ENCODE measurements at regions of chr9 and their contacts with region 1.

Region 1: GRCh38 chr9:77820293-77820954 is 172.3 kb upstream of the GNA14 start:
- DNase-seq: peak; percentile 32
- H3K4me3 Mint-ChIP-seq: no peak overlapping the region
- H3K27ac Mint-ChIP-seq: peak overlapping the region; percentile 62
- H3K4me1 Mint-ChIP-seq: peaks cover 34% of the 10 kb centered on the region
- H3K27me3 Mint-ChIP-seq: no peaks in the 10 kb centered on the region

Region 2: GRCh38 chr9:77575785-77576184 is 244.6 kb before region 1 on chr9:
- CTCF ChIA-PET with region 1: no interaction called
- POLR2A ChIA-PET with region 1: no interaction called
- intact Hi-C with region 1: no loop called
- DNase-seq: peak; percentile 12
- H3K4me3 Mint-ChIP-seq: no peak overlapping the region
- H3K27ac Mint-ChIP-seq: no peak overlapping the region
- H3K4me1 Mint-ChIP-seq: no peaks in the 10 kb centered on the region
- H3K27me3 Mint-ChIP-seq: peaks cover 10% of the 10 kb centered on the region

Region 3: DNA sequence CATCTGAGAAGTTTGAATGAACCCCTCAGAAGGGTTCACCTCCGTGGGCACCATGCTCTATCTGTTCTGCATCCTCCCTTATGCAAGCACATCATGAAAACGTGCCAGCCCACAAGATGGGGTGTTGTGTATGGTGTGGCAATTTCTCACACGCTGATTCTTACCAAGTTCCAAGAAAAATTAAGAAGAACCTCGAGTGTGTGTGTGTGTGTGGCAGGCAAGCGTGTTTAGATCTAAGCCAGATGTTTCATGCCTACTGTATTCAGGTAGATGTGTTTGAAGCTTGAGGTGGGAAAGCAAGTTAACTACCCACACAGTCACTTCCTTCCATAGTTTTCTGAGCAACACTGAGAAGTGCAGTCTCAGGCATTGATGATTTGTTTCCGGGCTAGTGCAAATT is 94.6 kb before region 1 on chr9:
- CTCF ChIA-PET with region 1: no interaction called
- POLR2A ChIA-PET with region 1: no interaction called
- intact Hi-C with region 1: loop called (anchors 5 kb)
- DNase-seq: peak; percentile 62
- H3K4me3 Mint-ChIP-seq: no peak overlapping the region
- H3K27ac Mint-ChIP-seq: peak overlapping the region; percentile 77
- H3K4me1 Mint-ChIP-seq: peaks cover 45% of the 10 kb centered on the region
- H3K27me3 Mint-ChIP-seq: no peaks in the 10 kb centered on the region

Region 4: GRCh38 chr9:77807281-77807683 is 13.1 kb before region 1 on chr9:
- CTCF ChIA-PET with region 1: no interaction called
- POLR2A ChIA-PET with region 1: no interaction called
- intact Hi-C with region 1: loop called (anchors 1 kb)
- DNase-seq: no peak
- H3K4me3 Mint-ChIP-seq: no peak overlapping the region
- H3K27ac Mint-ChIP-seq: peak overlapping the region; percentile 36
- H3K4me1 Mint-ChIP-seq: peaks cover 42% of the 10 kb centered on the region
- H3K27me3 Mint-ChIP-seq: no peaks in the 10 kb centered on the region

Region 5: GRCh38 chr9:78130004-78130403 is 309.6 kb after region 1 on chr9:
- CTCF ChIA-PET with region 1: no interaction called
- POLR2A ChIA-PET with region 1: no interaction called
- intact Hi-C with region 1: loop called (anchors 5 kb)
- DNase-seq: no peak
- H3K4me3 Mint-ChIP-seq: no peak overlapping the region
- H3K27ac Mint-ChIP-seq: no peak overlapping the region
- H3K4me1 Mint-ChIP-seq: peaks cover 19% of the 10 kb centered on the region
- H3K27me3 Mint-ChIP-seq: peaks cover 2% of the 10 kb centered on the region